ENCODE measurements at regions of chr19 and their contacts with region 1.

Region 1: DNA sequence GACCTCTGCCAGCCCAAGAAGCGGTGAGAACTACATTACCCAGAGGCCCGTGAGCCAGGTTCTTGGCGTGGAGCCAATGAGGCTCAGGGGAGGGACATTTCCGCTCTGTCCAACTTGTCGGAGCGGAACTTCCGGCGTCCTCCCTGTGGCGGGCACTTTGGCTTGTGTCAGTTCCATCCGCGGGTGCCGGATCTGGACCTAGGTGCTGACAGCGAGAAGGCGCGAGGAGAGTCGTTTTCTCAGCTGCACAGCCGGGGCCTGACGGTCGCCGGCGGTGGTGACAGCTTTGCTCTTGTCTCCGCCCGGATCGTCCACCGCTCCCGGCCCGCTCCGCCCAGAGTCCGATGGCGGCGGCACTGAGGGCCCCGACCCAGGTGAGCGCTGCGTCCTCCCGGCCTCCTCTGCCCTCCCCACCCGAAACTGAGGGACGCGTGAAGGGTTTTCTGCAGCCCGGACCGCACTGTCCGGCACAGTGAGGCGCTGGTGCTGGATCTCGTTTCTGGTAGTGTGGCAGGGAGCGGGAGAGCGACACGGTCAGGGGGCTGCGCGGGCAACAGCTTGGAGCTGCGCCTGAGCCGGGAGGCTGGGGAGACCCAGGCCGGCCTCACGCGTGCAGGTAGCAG is at the start of gene ZNF530:
- DNase-seq: peak; percentile 96
- total RNA-seq, gene ZNF530: 3.5 TPM

Region 2: DNA sequence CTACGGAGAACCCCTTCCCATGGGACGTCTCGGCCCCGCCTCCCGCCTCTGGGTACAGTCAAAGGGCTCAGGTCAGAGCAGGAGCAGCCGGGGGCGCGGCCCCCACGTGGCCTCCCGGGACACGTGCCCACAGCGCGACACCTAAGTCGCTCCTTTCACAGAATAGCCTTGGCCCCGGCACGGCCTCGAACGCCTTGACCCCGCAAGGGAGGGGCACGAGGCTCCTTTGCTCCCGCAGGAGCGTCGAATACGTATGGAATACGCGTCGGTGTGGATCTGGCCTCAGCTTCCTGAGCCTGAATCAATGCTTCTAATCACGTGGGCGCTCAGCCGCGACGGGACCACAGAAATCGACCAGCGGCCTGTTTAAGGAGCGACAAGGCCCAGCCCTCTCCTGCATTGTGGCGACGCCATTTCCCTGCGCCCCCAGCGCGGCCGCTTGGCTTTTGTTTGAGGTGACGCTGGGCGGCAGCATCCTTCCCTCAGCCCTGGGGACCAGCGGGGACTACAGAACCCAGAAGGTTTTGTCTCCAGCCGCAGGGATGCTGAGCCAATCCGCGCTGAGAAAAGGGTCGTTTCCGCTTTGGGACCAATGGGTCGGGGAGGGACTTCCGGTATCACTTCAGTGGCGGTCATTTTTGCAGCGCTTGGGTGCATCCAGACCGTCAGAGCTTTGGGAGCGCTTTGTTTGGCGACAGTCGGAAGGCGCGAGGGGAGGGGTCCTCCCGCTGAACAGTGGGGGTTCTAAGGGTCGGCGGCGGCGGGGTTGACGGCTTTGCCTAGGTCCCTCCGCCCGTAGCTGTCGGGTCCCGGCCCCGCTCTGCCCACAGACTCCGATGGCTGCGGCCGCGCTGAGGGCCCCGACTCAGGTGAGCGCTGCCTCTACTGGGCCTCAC is 16.1 kb before region 1 on chr19 and contains the start of gene ZIK1:
- intact Hi-C with region 1: loop called (anchors 2 kb)
- DNase-seq: peak; percentile 96
- total RNA-seq, gene ZIK1: 4.5 TPM